Stomach (tissue), 19 donors: ENCODE measurements at regions of chr21 and their contacts with region 1.

Region 1: DNA sequence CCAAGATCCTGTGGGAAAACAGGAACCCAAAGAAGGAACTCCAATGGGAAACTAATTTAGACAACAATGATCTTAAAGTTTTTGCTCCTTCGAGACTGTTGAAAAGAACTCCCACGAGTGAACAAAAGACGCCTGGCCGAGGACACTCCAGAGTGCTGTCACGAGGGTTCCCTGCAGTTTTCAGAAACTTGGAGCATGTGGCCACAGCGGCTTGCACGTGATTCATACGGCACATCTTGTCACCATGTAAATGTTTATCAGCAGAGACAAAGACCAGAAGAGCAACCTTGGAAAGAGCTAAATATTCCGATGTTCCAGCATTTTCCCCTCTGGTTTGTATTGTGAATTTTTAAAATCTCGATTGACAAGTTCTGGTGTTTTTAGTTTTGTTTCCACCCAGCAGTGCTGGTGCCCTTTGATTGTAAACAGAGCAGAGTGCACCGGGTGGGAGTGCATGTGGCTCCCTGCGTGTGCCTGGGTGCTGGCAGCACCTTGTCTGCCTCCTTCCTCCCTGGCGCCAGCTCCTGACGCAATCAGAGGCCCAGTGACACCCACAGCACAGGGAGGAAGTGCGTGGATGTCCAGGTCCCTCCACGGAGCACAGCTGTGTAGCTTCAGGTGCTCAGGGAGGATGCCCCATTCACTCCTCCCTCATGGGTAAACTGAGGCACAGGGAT is 23.0 kb downstream of the LRRC3 start:
- DNase-seq: no peak
- H3K4me3 ChIP-seq: no peak overlapping the region
- H3K27ac ChIP-seq: no peak overlapping the region
- H3K4me1 ChIP-seq: peaks cover 0 to 14% (median 5%) of the 10 kb centered on the region in 4 donors
- H3K27me3 ChIP-seq: peaks cover 0 to 7% (median 0%) of the 10 kb centered on the region in 3 donors
- CTCF ChIP-seq: no peak
- EP300 ChIP-seq: peak; percentile 25
- POLR2A ChIP-seq: no peak

Region 2: GRCh38 chr21:44353191-44353970 is 124.9 kb before region 1 on chr21 and contains the start of gene TRPM2:
- intact Hi-C with region 1: loop called (anchors 10 kb)
- DNase-seq: peak; percentile 40 to 61
- H3K4me3 ChIP-seq: peak within 1 kb of the TSS in 3 of 4 donors; percentile 5 to 32 (median 21)
- H3K27ac ChIP-seq: peak within 1 kb of the TSS; percentile 14 to 83 (median 52)
- H3K4me1 ChIP-seq: peaks cover 0 to 42% (median 11%) of the 10 kb centered on the region in 4 donors
- H3K27me3 ChIP-seq: peaks cover 16 to 64% (median 36%) of the 10 kb centered on the region in 3 donors
- CTCF ChIP-seq: no peak
- EP300 ChIP-seq: no peak
- POLR2A ChIP-seq: no peak
- total RNA-seq, gene TRPM2: 1.3 to 10.3 (median 3.5) TPM

Region 3: GRCh38 chr21:44637018-44637850 is 159.0 kb after region 1 on chr21 and contains the start of gene KRTAP10-10:
- intact Hi-C with region 1: no loop called
- DNase-seq: peak in 1 of 2 donors; percentile 17
- H3K4me3 ChIP-seq: no peak within 1 kb of the TSS
- H3K27ac ChIP-seq: no peak within 1 kb of the TSS
- H3K4me1 ChIP-seq: no peaks in the 10 kb centered on the region
- H3K27me3 ChIP-seq: peaks cover 0 to 53% (median 23%) of the 10 kb centered on the region in 3 donors
- CTCF ChIP-seq: no peak
- EP300 ChIP-seq: no peak
- POLR2A ChIP-seq: no peak
- total RNA-seq, gene KRTAP10-10: not detected